Activated CD4-positive, alpha-beta memory T cell treated with anti-CD3 and anti-CD28 coated beads for 36 hours (primary cell): ENCODE measurements at regions of chr14 and their contacts with region 1.

Region 1: GRCh38 chr14:94036313-94037050 is 10.3 kb downstream of the OTUB2 start:
- DNase-seq: peak; percentile 88
- H3K4me3 Mint-ChIP-seq: no peak overlapping the region
- H3K27ac Mint-ChIP-seq: no peak overlapping the region
- H3K4me1 Mint-ChIP-seq: peaks cover 3% of the 10 kb centered on the region
- H3K27me3 Mint-ChIP-seq: no peaks in the 10 kb centered on the region

Region 2: GRCh38 chr14:94021001-94021400 is 15.5 kb before region 1 on chr14:
- CTCF ChIA-PET with region 1: interaction called, 43 read pairs
- POLR2A ChIA-PET with region 1: interaction called, 6 read pairs
- intact Hi-C with region 1: no loop called
- DNase-seq: peak; percentile 36
- H3K4me3 Mint-ChIP-seq: no peak overlapping the region
- H3K27ac Mint-ChIP-seq: peak overlapping the region; percentile 70
- H3K4me1 Mint-ChIP-seq: peaks cover 31% of the 10 kb centered on the region
- H3K27me3 Mint-ChIP-seq: no peaks in the 10 kb centered on the region

Region 3: DNA sequence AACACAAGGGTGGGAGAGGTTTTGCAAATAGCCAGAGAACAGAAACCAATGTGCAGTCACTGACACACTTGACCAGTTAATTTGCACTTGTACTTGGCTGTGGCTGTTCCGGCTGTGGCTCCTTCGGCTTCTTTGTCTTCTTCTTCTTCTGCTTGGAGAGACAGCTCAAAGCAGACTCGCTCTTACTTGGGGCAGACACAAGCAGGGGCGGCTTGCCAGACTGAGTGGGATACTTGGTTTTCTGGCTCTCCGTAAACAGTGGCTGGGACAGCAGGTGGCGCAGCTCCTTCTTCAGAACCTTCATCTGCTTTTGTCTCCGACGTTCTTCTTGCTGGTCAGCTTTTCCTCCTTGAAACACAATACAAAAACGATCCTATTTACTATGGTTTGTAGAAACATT is 14.6 kb after region 1 on chr14:
- CTCF ChIA-PET with region 1: interaction called, 34 read pairs
- POLR2A ChIA-PET with region 1: no interaction called
- intact Hi-C with region 1: no loop called
- DNase-seq: peak; percentile 14
- H3K4me3 Mint-ChIP-seq: no peak overlapping the region
- H3K27ac Mint-ChIP-seq: peak overlapping the region; percentile 23
- H3K4me1 Mint-ChIP-seq: peaks cover 23% of the 10 kb centered on the region
- H3K27me3 Mint-ChIP-seq: no peaks in the 10 kb centered on the region

Region 4: GRCh38 chr14:94080471-94081289 is 44.2 kb after region 1 on chr14 and contains the start of gene DDX24:
- CTCF ChIA-PET with region 1: interaction called, 56 read pairs
- POLR2A ChIA-PET with region 1: interaction called, 4 read pairs
- intact Hi-C with region 1: loop called (anchors 1 kb)
- DNase-seq: peak; percentile 98
- H3K4me3 Mint-ChIP-seq: peak within 1 kb of the TSS; percentile 99
- H3K27ac Mint-ChIP-seq: peak within 1 kb of the TSS; percentile 99
- H3K4me1 Mint-ChIP-seq: peaks cover 50% of the 10 kb centered on the region
- H3K27me3 Mint-ChIP-seq: no peaks in the 10 kb centered on the region
- total RNA-seq, gene DDX24: 241 to 252 TPM

Region 5: GRCh38 chr14:94180655-94181271 is 144.3 kb after region 1 on chr14:
- CTCF ChIA-PET with region 1: interaction called, 19 read pairs
- POLR2A ChIA-PET with region 1: no interaction called
- intact Hi-C with region 1: loop called (anchors 1 kb)
- DNase-seq: no peak
- H3K4me3 Mint-ChIP-seq: peak overlapping the region; percentile 54
- H3K27ac Mint-ChIP-seq: peak overlapping the region; percentile 67
- H3K4me1 Mint-ChIP-seq: peaks cover 50% of the 10 kb centered on the region
- H3K27me3 Mint-ChIP-seq: no peaks in the 10 kb centered on the region